ENCODE measurements at regions of chr20 and their contacts with region 1.

Region 1: DNA sequence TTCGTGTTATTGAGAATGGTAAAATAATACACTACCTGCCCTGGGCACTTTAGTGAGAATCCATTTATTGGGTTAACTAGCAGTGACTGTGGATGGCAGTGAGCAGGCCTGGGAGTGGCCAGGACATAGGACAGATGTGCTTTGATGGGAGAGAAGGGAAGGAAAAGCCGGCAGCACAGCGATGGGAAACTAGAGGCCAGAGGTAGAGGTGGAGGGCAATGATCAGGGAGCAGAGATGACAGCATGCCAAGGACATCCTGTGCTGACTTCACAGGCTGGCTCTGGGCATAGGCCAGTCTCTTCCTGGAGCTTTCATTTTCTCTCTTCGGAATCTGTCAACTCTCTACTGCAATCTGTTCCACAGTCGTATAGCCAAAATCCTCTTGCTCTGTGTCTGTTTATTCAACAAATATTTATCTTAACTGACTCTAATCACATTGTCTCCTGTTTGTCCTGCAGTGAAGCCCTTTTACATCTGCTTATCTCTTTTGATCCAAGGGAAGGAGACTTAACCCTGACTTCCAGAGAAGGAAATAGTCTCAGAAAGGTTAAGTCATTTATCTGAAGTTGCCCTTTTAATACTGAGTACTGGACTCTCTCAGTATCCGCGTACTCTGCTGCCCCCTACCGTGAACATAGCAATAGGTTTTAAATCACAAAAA is 18.4 kb upstream of the MMP24 start:
- DNase-seq: peak; percentile 81
- ATAC-seq: peak; percentile 84
- H3K4me3 ChIP-seq: no peak overlapping the region
- H3K4me3 Mint-ChIP-seq: no peak overlapping the region
- H3K27ac ChIP-seq: no peak overlapping the region
- H3K27ac Mint-ChIP-seq: no peak overlapping the region
- H3K4me1 ChIP-seq: no peaks in the 10 kb centered on the region
- H3K4me1 Mint-ChIP-seq: no peaks in the 10 kb centered on the region
- H3K27me3 ChIP-seq: no peaks in the 10 kb centered on the region
- H3K27me3 Mint-ChIP-seq: no peaks in the 10 kb centered on the region
- CTCF ChIP-seq: peak; percentile 87

Region 2: DNA sequence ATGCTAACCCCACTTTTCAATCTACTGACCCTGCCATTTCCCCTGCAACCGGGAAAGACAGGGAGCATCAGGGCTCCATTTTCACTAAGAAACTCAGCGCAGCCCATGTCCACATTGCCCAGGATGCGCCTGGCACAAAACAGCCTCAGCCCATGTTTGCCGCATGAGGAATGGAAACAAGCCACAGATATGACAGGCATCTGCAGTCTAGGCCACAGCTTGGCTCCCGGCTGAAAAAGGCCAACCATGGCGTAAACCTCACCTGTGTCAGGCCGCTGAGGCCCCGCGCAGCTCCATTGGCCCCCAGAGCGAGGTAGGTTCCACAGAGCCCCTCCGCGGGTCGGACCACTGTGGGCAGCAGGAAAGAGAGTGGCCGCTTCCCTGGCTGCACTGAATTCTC is 357.1 kb before region 1 on chr20:
- CTCF ChIA-PET with region 1: no interaction called
- POLR2A ChIA-PET with region 1: no interaction called
- intact Hi-C with region 1: no loop called
- DNase-seq: no peak
- ATAC-seq: no peak
- H3K4me3 ChIP-seq: no peak overlapping the region
- H3K4me3 Mint-ChIP-seq: no peak overlapping the region
- H3K27ac ChIP-seq: no peak overlapping the region
- H3K27ac Mint-ChIP-seq: no peak overlapping the region
- H3K4me1 ChIP-seq: no peaks in the 10 kb centered on the region
- H3K4me1 Mint-ChIP-seq: no peaks in the 10 kb centered on the region
- H3K27me3 ChIP-seq: no peaks in the 10 kb centered on the region
- H3K27me3 Mint-ChIP-seq: no peaks in the 10 kb centered on the region
- CTCF ChIP-seq: no peak

Region 3: GRCh38 chr20:35104685-35105295 is 103.3 kb before region 1 on chr20:
- CTCF ChIA-PET with region 1: interaction called, 11 read pairs
- POLR2A ChIA-PET with region 1: no interaction called
- intact Hi-C with region 1: no loop called
- DNase-seq: no peak
- ATAC-seq: no peak
- H3K4me3 ChIP-seq: no peak overlapping the region
- H3K4me3 Mint-ChIP-seq: no peak overlapping the region
- H3K27ac ChIP-seq: no peak overlapping the region
- H3K27ac Mint-ChIP-seq: no peak overlapping the region
- H3K4me1 ChIP-seq: no peaks in the 10 kb centered on the region
- H3K4me1 Mint-ChIP-seq: no peaks in the 10 kb centered on the region
- H3K27me3 ChIP-seq: no peaks in the 10 kb centered on the region
- H3K27me3 Mint-ChIP-seq: peaks cover 7% of the 10 kb centered on the region
- CTCF ChIP-seq: no peak

Region 4: GRCh38 chr20:35146920-35147574 is 61.0 kb before region 1 on chr20 and contains the start of gene EDEM2:
- CTCF ChIA-PET with region 1: interaction called, 34 read pairs
- POLR2A ChIA-PET with region 1: no interaction called
- intact Hi-C with region 1: loop called (anchors 1 kb)
- DNase-seq: peak; percentile 95
- ATAC-seq: peak; percentile 80
- H3K4me3 ChIP-seq: peak within 1 kb of the TSS; percentile 69 to 94 (median 90)
- H3K4me3 Mint-ChIP-seq: peak within 1 kb of the TSS; percentile 96
- H3K27ac ChIP-seq: peak within 1 kb of the TSS; percentile 79 to 89
- H3K27ac Mint-ChIP-seq: peak within 1 kb of the TSS; percentile 94
- H3K4me1 ChIP-seq: peaks cover 33 to 43% of the 10 kb centered on the region in 2 donors
- H3K4me1 Mint-ChIP-seq: peaks cover 36% of the 10 kb centered on the region
- H3K27me3 ChIP-seq: no peaks in the 10 kb centered on the region
- H3K27me3 Mint-ChIP-seq: no peaks in the 10 kb centered on the region
- CTCF ChIP-seq: no peak
- total RNA-seq, gene EDEM2: 28.1 and 28.6 TPM in 2 replicates

Measured in B cell (primary cell).